Naive thymus-derived CD4-positive, alpha-beta T cell (primary cell): ENCODE measurements at regions of chr1 and their contacts with region 1.

Region 1: DNA sequence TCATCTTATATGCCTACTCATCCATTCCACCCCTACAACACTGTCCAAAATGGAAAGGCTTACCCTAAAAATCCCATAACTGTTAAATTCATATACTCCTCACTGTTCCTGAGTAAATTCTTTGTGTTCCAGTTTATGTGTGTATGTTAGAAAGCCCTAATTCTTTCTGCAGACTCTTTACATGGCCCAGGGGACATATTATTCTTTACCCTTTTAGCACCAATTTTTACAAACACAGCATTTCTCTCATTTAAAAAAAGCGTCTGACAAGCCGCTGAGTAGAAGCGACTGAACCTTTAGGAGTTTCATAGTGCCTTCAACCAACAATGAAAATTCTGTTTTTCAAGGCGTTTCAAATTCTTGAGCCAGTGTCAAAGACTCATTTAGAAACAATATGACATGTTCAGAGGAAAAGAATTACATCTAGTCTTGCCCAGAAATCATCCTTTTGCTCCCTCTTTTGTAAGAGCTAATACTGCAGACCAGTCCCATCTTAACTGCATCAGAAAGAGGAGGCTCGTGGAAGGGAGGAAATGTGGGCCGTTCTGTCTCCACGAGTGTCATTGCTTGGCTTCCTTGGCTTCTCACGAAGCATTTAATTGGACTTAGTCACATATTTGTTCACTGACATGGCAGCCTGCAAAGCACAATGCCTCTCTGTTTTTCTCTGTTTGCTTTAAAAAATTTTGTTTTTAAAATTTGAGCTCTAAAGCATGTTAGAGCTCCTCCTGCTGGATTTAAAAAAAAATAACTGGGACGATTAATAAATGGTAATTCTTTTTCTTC is 21.3 kb upstream of the C1orf105 start:
- DNase-seq: peak in 7 of 9 donors; percentile 20 to 57 (median 46)
- ATAC-seq: peak; percentile 49
- H3K4me3 ChIP-seq: peak overlapping the region; percentile 12
- H3K4me3 Mint-ChIP-seq: peak overlapping the region; percentile 43 to 79 (median 64)
- H3K27ac ChIP-seq: no peak overlapping the region
- H3K27ac Mint-ChIP-seq: peak overlapping the region; percentile 60 to 100 (median 89)
- H3K4me1 ChIP-seq: peaks cover 30 to 46% of the 10 kb centered on the region in 2 donors
- H3K4me1 Mint-ChIP-seq: peaks cover 31 to 85% (median 72%) of the 10 kb centered on the region in 7 donors
- H3K27me3 ChIP-seq: no peaks in the 10 kb centered on the region
- H3K27me3 Mint-ChIP-seq: peaks cover 0 to 2% (median 0%) of the 10 kb centered on the region in 5 donors

Region 2: GRCh38 chr1:172002725-172003345 is 396.3 kb before region 1 on chr1:
- CTCF ChIA-PET with region 1: interaction called, 7 read pairs
- POLR2A ChIA-PET with region 1: interaction called, 4 read pairs
- intact Hi-C with region 1: loop called (anchors 1 kb)
- DNase-seq: peak in 7 of 9 donors; percentile 8 to 53 (median 37)
- ATAC-seq: peak; percentile 55
- H3K4me3 ChIP-seq: no peak overlapping the region
- H3K4me3 Mint-ChIP-seq: no peak overlapping the region
- H3K27ac ChIP-seq: no peak overlapping the region
- H3K27ac Mint-ChIP-seq: no peak overlapping the region
- H3K4me1 ChIP-seq: no peaks in the 10 kb centered on the region
- H3K4me1 Mint-ChIP-seq: peaks cover 0 to 8% (median 3%) of the 10 kb centered on the region in 7 donors
- H3K27me3 ChIP-seq: no peaks in the 10 kb centered on the region
- H3K27me3 Mint-ChIP-seq: no peaks in the 10 kb centered on the region

Region 3: GRCh38 chr1:172135076-172135672 is 264.0 kb before region 1 on chr1:
- CTCF ChIA-PET with region 1: interaction called, 6 read pairs
- POLR2A ChIA-PET with region 1: interaction called, 3 read pairs
- intact Hi-C with region 1: loop called (anchors 1 to 5 kb)
- DNase-seq: peak in 6 of 9 donors; percentile 9 to 37 (median 22)
- ATAC-seq: peak; percentile 48
- H3K4me3 ChIP-seq: no peak overlapping the region
- H3K4me3 Mint-ChIP-seq: no peak overlapping the region
- H3K27ac ChIP-seq: no peak overlapping the region
- H3K27ac Mint-ChIP-seq: no peak overlapping the region
- H3K4me1 ChIP-seq: no peaks in the 10 kb centered on the region
- H3K4me1 Mint-ChIP-seq: peaks cover 0 to 12% (median 0%) of the 10 kb centered on the region in 7 donors
- H3K27me3 ChIP-seq: no peaks in the 10 kb centered on the region
- H3K27me3 Mint-ChIP-seq: no peaks in the 10 kb centered on the region

Region 4: GRCh38 chr1:172269644-172270043 is 129.5 kb before region 1 on chr1:
- CTCF ChIA-PET with region 1: no interaction called
- POLR2A ChIA-PET with region 1: no interaction called
- intact Hi-C with region 1: loop called in 1 of 2 experiments (anchors 5 kb)
- DNase-seq: no peak
- ATAC-seq: no peak
- H3K4me3 ChIP-seq: no peak overlapping the region
- H3K4me3 Mint-ChIP-seq: peak overlapping the region in 1 of 10 donors; percentile 18
- H3K27ac ChIP-seq: no peak overlapping the region
- H3K27ac Mint-ChIP-seq: peak overlapping the region in 2 of 9 donors; percentile 31 to 71
- H3K4me1 ChIP-seq: no peaks in the 10 kb centered on the region
- H3K4me1 Mint-ChIP-seq: peaks cover 0 to 43% (median 0%) of the 10 kb centered on the region in 7 donors
- H3K27me3 ChIP-seq: no peaks in the 10 kb centered on the region
- H3K27me3 Mint-ChIP-seq: no peaks in the 10 kb centered on the region

Region 5: DNA sequence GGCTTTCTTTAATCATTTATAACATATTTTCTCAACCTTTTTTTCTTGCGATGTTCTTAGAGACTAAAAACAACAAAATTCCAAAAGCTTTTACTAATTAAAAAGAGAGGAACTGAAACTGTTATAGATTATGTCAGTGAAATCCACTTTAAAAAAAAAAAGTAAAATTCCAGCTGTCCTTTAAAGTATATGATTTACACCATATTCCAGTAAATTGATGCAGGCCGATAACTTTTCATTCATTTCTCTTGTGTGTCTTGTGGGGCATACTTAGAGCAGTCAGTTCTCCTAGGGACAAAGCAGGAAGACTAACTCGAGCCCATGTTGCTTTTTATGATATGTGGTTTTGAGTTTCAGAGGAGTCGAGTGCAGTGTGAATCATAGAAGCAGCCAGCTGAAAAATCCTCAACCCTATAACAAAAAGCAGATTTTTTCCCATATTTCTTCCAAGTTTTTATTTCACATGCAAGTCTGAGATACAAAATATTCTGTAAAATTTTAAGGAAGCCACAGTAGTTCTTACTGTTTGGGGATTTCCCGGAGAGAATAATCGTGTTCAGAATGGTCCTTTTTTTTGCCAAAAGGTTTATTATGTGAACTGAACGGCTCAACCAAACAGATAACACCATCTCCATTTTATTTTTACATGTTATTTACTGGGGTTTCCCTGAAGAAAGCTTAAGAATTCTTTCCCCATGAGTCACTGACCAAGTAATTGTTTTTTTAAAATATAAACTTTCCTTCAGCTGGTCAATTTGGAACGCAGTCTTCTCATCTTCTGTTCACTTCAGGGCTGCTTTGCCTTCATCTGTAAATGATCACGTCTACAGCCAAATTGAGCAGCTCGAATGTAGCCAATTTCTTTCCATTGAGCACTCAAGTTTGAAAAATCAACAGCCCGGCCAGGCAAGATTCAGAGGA is 55.7 kb before region 1 on chr1:
- CTCF ChIA-PET with region 1: interaction called, 4 read pairs
- POLR2A ChIA-PET with region 1: no interaction called
- intact Hi-C with region 1: loop called (anchors 1 to 2 kb)
- DNase-seq: no peak
- ATAC-seq: no peak
- H3K4me3 ChIP-seq: no peak overlapping the region
- H3K4me3 Mint-ChIP-seq: peak overlapping the region in 2 of 10 donors; percentile 15 to 23
- H3K27ac ChIP-seq: no peak overlapping the region
- H3K27ac Mint-ChIP-seq: peak overlapping the region in 3 of 9 donors; percentile 4 to 20 (median 12)
- H3K4me1 ChIP-seq: peaks cover 0 to under 1% of the 10 kb centered on the region in 2 donors
- H3K4me1 Mint-ChIP-seq: peaks cover 5 to 37% (median 9%) of the 10 kb centered on the region in 7 donors
- H3K27me3 ChIP-seq: no peaks in the 10 kb centered on the region
- H3K27me3 Mint-ChIP-seq: no peaks in the 10 kb centered on the region

Region 6: GRCh38 chr1:172380441-172381244 is 18.5 kb before region 1 on chr1:
- CTCF ChIA-PET with region 1: interaction called, 15 read pairs
- POLR2A ChIA-PET with region 1: interaction called, 94 read pairs
- intact Hi-C with region 1: loop called (anchors 1 kb)
- DNase-seq: peak in 7 of 9 donors; percentile 49 to 82 (median 70)
- ATAC-seq: peak; percentile 96
- H3K4me3 ChIP-seq: peak overlapping the region; percentile 32
- H3K4me3 Mint-ChIP-seq: peak overlapping the region; percentile 53 to 82 (median 76)
- H3K27ac ChIP-seq: peak overlapping the region; percentile 76
- H3K27ac Mint-ChIP-seq: peak overlapping the region; percentile 86 to 94 (median 93)
- H3K4me1 ChIP-seq: peaks cover 10 to 18% of the 10 kb centered on the region in 2 donors
- H3K4me1 Mint-ChIP-seq: peaks cover 12 to 57% (median 49%) of the 10 kb centered on the region in 7 donors
- H3K27me3 ChIP-seq: no peaks in the 10 kb centered on the region
- H3K27me3 Mint-ChIP-seq: peaks cover 0 to 3% (median 0%) of the 10 kb centered on the region in 5 donors

Region 7: DNA sequence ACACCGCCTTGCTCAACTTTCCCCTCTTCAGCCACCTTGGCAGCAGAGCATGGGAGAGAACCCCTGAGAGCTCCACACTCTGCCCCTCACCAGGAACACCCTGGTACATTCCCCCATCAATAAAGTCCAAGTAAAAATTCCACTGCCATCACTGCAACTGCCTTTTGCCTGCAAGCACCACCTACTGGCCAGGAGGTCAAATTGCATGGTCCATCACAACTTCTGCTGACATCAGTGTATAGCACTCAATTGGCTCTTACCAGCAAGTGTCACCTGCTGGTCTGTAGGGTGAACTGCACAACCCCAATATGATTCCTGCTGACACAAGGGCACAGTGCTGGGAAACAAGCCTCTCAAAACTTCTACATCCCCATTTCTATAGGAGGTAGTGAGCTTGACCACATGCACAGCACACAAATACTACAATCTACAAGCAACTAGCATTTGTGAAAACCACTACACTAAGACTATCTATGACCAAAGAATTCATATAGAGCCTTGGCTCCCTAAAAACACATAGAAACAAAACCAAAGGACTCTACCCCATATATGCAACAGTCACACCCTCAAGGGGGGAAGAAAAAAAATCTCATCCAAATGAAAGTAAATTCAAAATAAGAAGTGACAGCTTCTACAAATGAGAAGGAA is 328.9 kb after region 1 on chr1:
- CTCF ChIA-PET with region 1: no interaction called
- POLR2A ChIA-PET with region 1: no interaction called
- intact Hi-C with region 1: no loop called
- DNase-seq: peak in 6 of 9 donors; percentile 23 to 42 (median 38)
- ATAC-seq: peak; percentile 88
- H3K4me3 ChIP-seq: no peak overlapping the region
- H3K4me3 Mint-ChIP-seq: no peak overlapping the region
- H3K27ac ChIP-seq: no peak overlapping the region
- H3K27ac Mint-ChIP-seq: peak overlapping the region in 1 of 9 donors; percentile 1
- H3K4me1 ChIP-seq: peaks cover 0 to 6% of the 10 kb centered on the region in 2 donors
- H3K4me1 Mint-ChIP-seq: peaks cover 7 to 25% (median 15%) of the 10 kb centered on the region in 7 donors
- H3K27me3 ChIP-seq: no peaks in the 10 kb centered on the region
- H3K27me3 Mint-ChIP-seq: peaks cover 0 to 42% (median 0%) of the 10 kb centered on the region in 5 donors